ENCODE measurements at regions of chr10 and their contacts with region 1.

Region 1: GRCh38 chr10:33570495-33570894 is 236.0 kb upstream of the NRP1 start:
- H3K4me3 Mint-ChIP-seq: no peak overlapping the region
- H3K27ac Mint-ChIP-seq: peak overlapping the region; percentile 88
- H3K4me1 Mint-ChIP-seq: peaks cover 60% of the 10 kb centered on the region
- H3K27me3 Mint-ChIP-seq: no peaks in the 10 kb centered on the region

Region 2: GRCh38 chr10:33335801-33336581 is 234.5 kb before region 1 on chr10:
- intact Hi-C with region 1: loop called (anchors 1 kb)
- H3K4me3 Mint-ChIP-seq: peak overlapping the region; percentile 96
- H3K27ac Mint-ChIP-seq: peak overlapping the region; percentile 94
- H3K4me1 Mint-ChIP-seq: peaks cover 9% of the 10 kb centered on the region
- H3K27me3 Mint-ChIP-seq: peaks cover 22% of the 10 kb centered on the region

Region 3: DNA sequence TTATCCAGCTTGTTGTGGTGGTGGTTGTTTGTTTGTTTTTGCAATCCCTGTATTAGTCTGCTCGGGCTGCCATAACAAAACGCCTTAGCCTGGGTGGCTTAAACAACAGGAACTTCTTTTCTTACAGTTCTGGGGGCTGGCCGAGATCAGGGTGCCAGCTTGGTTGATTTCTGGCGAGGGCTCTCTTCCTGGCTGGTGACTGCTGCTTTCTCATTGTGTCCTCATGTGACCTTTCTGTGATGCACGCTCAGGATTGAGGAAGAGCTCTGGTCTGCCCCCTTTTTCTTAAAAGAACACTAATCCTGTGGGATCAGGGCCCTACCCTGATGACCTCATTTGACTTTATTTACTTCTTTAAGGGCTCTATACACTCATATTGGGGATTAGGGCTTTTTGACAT is 128.9 kb before region 1 on chr10:
- intact Hi-C with region 1: no loop called
- H3K4me3 Mint-ChIP-seq: no peak overlapping the region
- H3K27ac Mint-ChIP-seq: no peak overlapping the region
- H3K4me1 Mint-ChIP-seq: peaks cover 5% of the 10 kb centered on the region
- H3K27me3 Mint-ChIP-seq: peaks cover 11% of the 10 kb centered on the region

Region 4: GRCh38 chr10:33609546-33609945 is 39.1 kb after region 1 on chr10:
- intact Hi-C with region 1: loop called (anchors 5 kb)
- H3K4me3 Mint-ChIP-seq: no peak overlapping the region
- H3K27ac Mint-ChIP-seq: no peak overlapping the region
- H3K4me1 Mint-ChIP-seq: peaks cover 24% of the 10 kb centered on the region
- H3K27me3 Mint-ChIP-seq: no peaks in the 10 kb centered on the region

Region 5: DNA sequence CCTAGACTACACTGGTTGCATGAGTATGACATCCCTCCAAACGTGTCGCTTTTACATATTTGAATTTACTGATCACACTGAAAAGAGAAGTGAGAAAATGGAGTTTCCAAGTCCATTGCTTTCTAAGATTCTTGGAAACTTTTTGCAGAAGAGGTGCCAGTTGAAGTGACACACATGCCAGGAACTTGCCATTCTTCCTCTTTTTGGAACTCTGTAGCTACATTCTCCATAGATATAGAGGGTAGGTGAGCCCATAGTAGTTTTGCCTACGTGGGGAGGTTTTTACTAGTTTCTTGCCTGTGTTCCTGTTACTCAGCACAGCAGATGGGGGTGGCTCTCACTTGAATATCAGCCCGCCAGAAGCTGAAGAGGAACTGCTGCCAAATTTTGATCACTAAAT is 50.6 kb after region 1 on chr10:
- intact Hi-C with region 1: loop called (anchors 5 kb)
- H3K4me3 Mint-ChIP-seq: peak overlapping the region; percentile 50
- H3K27ac Mint-ChIP-seq: peak overlapping the region; percentile 93
- H3K4me1 Mint-ChIP-seq: peaks cover 64% of the 10 kb centered on the region
- H3K27me3 Mint-ChIP-seq: peaks cover 2% of the 10 kb centered on the region

Region 6: DNA sequence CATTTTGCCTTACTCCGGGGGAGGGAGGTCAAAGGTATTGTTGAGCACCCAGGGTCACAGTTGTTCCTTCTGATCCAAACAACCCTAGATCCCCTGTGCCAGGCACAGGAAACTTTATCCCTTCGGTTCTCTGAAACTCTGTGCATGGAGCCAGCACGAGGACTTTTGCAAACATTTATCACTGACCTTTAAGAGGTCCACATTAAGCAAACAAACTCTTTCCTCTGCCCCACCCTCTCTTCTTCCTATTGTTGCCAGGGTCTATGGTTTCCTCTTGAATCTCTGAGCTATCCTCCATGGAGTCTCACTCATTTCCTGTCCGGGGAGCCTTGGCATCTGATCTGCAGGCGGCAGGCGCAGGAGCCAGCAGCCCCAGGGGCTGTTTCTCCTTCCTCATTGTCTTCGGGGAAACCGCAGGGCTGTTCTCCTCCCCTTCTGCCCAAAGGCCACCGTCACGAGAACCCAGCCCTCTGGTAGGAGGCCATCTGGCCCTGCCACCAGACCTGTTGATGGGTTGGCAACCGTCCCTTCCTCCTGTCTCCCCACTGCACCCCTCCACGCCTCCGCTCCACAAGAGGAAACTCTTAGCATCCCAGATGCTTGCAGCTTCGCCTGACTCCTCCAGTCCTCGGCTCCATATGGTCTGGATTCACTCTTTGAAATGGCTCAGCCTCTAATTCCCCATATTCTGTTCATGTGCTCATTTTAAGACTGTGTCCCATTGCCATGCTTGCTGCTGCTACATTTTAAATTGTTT is 91.3 kb after region 1 on chr10:
- intact Hi-C with region 1: loop called (anchors 5 kb)
- H3K4me3 Mint-ChIP-seq: peak overlapping the region; percentile 44
- H3K27ac Mint-ChIP-seq: peak overlapping the region; percentile 97
- H3K4me1 Mint-ChIP-seq: peaks cover 59% of the 10 kb centered on the region
- H3K27me3 Mint-ChIP-seq: no peaks in the 10 kb centered on the region

Measured in dendritic cell treated with granulocyte-macrophage colony-stimulating factor and Interleukin-4, amounts not matched to agents 40 ng/mL and 50 ng/mL, for 4 days (primary cell).